MCF 10A (cell line): ENCODE measurements at regions of chr7 and their contacts with region 1.

Region 1: DNA sequence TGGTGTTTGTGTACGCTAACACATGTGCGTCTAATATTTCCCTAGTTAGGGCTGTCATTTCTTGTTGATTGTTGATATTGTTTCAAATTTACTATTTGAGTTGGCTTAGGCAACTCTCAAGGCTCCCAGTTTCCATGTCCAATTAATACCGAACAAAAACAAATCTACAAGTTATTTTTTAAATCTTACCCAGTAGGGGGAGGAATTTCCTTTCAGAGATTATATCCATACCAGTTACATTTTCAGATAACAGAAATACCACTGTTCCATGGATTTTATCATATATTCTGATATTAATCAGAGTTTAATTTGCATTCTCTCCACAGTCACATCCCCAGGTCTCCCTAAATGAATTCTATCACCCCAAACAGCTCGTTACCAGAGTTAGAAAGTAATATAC is 7.2 kb upstream of the AKR1B10 start:
- DNase-seq: peak; percentile 23
- H3K4me3 Mint-ChIP-seq: no peak overlapping the region
- H3K27ac Mint-ChIP-seq: no peak overlapping the region
- H3K4me1 Mint-ChIP-seq: peaks cover 26% of the 10 kb centered on the region
- H3K27me3 Mint-ChIP-seq: no peaks in the 10 kb centered on the region
- CTCF ChIP-seq: no peak

Region 2: GRCh38 chr7:133265821-133266220 is 1254.3 kb before region 1 on chr7:
- CTCF ChIA-PET with region 1: no interaction called
- POLR2A ChIA-PET with region 1: no interaction called
- intact Hi-C with region 1: no loop called
- DNase-seq: no peak
- H3K4me3 Mint-ChIP-seq: no peak overlapping the region
- H3K27ac Mint-ChIP-seq: no peak overlapping the region
- H3K4me1 Mint-ChIP-seq: peaks cover 15% of the 10 kb centered on the region
- H3K27me3 Mint-ChIP-seq: no peaks in the 10 kb centered on the region
- CTCF ChIP-seq: no peak

Region 3: DNA sequence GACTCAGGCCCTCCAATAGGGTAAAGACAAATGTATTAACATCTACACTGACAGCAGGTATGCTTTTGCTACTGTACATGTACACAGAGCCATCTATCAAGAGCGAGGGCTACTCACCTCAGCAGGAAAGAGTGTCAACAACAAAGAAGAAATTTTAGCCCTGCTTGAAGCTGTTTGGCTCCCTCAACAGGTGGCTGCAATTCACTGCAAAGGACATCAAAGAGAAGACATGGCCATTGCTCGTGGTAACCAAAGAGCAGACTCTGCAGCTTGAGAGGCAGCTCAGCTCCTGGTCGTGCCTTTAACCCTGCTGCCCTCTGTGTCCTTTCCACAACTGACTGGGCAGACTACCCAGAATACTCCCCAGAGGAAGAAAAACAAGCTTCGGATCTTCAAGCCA is 33.8 kb after region 1 on chr7:
- CTCF ChIA-PET with region 1: interaction called, 71 read pairs
- POLR2A ChIA-PET with region 1: interaction called, 9 read pairs
- intact Hi-C with region 1: no loop called
- DNase-seq: peak; percentile 45
- H3K4me3 Mint-ChIP-seq: no peak overlapping the region
- H3K27ac Mint-ChIP-seq: no peak overlapping the region
- H3K4me1 Mint-ChIP-seq: peaks cover 3% of the 10 kb centered on the region
- H3K27me3 Mint-ChIP-seq: no peaks in the 10 kb centered on the region
- CTCF ChIP-seq: no peak